A549 (cell line): ENCODE measurements at regions of chr3 and their contacts with region 1.

Region 1: GRCh38 chr3:158109804-158110657 is at the start of gene RSRC1:
- DNase-seq: peak; percentile 67 to 93
- ATAC-seq: peak; percentile 77 to 88
- H3K4me3 ChIP-seq: peak within 1 kb of the TSS; percentile 66
- H3K27ac ChIP-seq: peak within 1 kb of the TSS; percentile 87 to 98
- H3K4me1 ChIP-seq: peaks cover 17% of the 10 kb centered on the region
- CTCF ChIP-seq: no peak
- EP300 ChIP-seq: no peak
- POLR2A ChIP-seq: peak; percentile 81
- RAD21 ChIP-seq: no peak; a peak in 1 of 5 replicates
- polyA plus RNA-seq, gene RSRC1: 17.5 and 17.6 TPM in 2 replicates

Region 2: DNA sequence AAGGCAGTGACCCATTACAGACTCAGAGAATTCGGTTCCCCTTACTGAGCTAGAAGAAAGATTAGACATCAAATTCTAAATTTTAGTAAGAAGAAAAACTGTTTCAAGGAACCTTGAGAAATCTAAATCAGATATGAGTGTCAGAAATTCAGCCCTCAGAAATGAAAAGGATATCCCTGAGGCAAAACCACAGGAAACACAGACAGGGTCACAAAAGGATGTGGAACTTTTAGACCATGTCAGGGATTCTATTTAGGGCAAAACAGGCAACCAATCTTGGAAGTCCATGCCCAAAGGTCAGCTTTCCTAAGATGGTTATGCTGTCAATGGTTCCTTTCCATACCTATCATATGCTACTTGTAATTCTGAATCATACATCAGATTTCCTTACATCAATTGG is 35.4 kb before region 1 on chr3:
- CTCF ChIA-PET with region 1: no interaction called
- POLR2A ChIA-PET with region 1: no interaction called
- DNase-seq: no peak
- ATAC-seq: no peak
- H3K4me3 ChIP-seq: no peak overlapping the region
- H3K27ac ChIP-seq: no peak overlapping the region
- H3K4me1 ChIP-seq: no peaks in the 10 kb centered on the region
- CTCF ChIP-seq: no peak
- EP300 ChIP-seq: no peak
- POLR2A ChIP-seq: no peak
- RAD21 ChIP-seq: no peak

Region 3: DNA sequence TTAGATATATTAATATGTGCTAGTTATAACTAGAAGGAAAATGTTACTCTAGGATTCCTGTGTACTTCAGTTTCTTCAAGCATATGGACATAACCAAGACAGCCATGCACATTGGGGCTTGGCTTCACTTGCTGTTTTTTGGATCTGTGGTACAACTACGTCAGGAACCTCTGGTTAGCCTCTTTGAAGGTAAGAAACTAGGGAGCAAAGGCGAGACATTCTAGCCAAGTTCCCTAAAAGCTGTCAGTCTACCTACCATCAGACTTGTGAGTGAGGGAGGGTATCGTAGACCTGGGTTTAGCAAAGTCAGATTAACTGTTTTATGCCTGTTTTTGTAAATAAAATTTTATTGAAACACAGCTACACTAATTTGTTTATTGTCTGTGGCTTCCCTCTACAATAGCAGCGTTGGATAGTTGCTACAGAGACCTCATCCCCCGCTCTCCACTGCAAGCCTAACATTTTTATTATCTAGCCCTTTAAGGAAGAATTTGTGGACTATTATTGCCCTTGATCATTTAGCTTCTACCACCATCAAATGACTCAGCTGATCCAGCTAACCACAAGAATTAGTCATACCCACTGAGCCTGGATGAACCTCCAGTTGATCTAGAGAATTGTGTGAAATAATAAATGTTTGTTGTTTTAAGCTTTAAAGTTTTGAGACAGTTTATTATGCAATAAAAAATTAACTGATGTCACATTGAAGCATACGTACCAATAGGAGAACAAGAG is 57.9 kb after region 1 on chr3:
- CTCF ChIA-PET with region 1: no interaction called
- POLR2A ChIA-PET with region 1: interaction called, 15 read pairs
- DNase-seq: peak; percentile 60 to 79
- ATAC-seq: peak; percentile 96 to 99
- H3K4me3 ChIP-seq: no peak overlapping the region
- H3K27ac ChIP-seq: peak overlapping the region; percentile 55 to 77
- H3K4me1 ChIP-seq: peaks cover 40% of the 10 kb centered on the region
- CTCF ChIP-seq: no peak
- EP300 ChIP-seq: peak; percentile 13 to 35; a peak in 1 of 5 replicates
- POLR2A ChIP-seq: no peak
- RAD21 ChIP-seq: peak; percentile 14 to 28; a peak in 2 of 5 replicates

Region 4: DNA sequence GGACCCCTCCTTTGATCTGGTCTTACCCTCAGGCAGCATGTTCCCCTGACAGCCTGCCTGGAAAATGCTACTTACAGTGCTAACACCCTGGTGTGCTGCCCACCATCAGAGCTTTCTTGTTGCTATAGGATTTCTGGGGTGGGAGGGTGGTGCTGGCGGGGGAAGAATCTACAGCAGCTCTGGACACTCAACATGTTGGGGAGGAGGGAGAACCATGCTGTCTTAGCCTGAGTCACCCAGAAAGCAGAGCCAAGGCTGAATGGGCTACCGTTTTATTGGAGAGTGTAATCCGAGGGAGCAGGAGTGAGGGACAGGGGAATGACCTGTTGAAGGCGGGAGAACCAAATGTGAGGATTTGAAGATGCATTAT is 737.4 kb after region 1 on chr3:
- CTCF ChIA-PET with region 1: no interaction called
- POLR2A ChIA-PET with region 1: no interaction called
- DNase-seq: no peak
- ATAC-seq: 0 out of 6 replicates have a peak, but pooled peaks of 1 of the 2 experiments have one; percentile 14
- H3K4me3 ChIP-seq: no peak overlapping the region
- H3K27ac ChIP-seq: no peak overlapping the region
- H3K4me1 ChIP-seq: no peaks in the 10 kb centered on the region
- CTCF ChIP-seq: no peak
- EP300 ChIP-seq: no peak
- POLR2A ChIP-seq: no peak
- RAD21 ChIP-seq: no peak